ENCODE measurements at regions of chr2 and their contacts with region 1.

Region 1: DNA sequence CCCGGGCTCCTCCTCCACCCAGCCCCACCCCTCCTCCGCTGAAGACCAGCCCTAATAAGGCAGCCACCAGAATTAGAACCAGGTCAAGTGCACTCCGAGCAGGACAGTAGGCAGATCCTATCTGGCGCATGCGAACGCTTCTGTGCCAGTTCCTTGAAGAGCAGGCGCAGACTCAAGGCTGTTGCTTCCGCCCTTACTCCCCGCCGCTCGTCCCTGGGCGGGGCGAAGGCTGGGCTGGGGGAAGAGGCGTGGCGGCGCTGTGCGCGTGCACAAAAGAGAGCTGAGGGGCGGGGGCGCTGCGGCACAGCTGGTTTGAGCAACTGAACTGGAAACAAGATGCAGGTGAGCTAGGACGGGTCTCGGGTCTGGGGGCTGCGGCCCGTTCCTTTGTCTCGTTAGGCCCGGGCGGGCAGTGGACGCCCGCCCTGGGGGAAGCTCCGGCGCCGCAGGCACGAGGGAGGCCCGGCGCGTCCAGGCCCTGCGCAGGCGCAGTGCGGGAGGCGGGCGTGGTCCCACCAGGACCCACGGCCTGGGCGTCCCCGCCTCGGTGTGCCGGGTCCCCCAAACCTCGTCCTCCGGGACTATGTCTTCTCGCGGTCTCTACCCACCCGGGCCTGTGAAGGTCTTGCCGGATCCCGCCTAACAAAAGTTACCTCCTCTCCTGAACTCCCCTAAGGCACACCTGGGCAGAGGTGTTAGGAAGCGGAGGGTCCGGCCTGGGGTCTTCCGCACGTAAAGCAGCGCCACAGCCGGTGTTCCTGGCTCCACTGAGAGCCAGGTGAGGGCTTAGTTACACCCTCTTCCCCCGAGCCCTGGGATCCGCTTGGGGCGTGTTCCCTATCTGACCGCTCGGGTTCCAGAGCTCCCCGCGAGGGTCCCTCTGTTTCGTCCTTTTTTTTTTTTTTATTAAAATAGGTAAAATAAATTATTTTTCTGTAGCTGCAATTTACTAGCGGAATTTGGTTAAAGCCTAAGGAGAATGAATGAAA is at the start of gene PDCL3:
- DNase-seq: peak; percentile 95 to 98
- ATAC-seq: peak; percentile 95 to 98 (median 96)
- H3K4me3 ChIP-seq: peak within 1 kb of the TSS; percentile 86
- H3K27ac ChIP-seq: peak within 1 kb of the TSS; percentile 90
- H3K4me1 ChIP-seq: peaks cover 5% of the 10 kb centered on the region
- H3K27me3 ChIP-seq: no peaks in the 10 kb centered on the region
- CTCF ChIP-seq: no peak
- total RNA-seq, gene PDCL3: 23.1 to 31.2 (median 29.8) TPM

Region 2: DNA sequence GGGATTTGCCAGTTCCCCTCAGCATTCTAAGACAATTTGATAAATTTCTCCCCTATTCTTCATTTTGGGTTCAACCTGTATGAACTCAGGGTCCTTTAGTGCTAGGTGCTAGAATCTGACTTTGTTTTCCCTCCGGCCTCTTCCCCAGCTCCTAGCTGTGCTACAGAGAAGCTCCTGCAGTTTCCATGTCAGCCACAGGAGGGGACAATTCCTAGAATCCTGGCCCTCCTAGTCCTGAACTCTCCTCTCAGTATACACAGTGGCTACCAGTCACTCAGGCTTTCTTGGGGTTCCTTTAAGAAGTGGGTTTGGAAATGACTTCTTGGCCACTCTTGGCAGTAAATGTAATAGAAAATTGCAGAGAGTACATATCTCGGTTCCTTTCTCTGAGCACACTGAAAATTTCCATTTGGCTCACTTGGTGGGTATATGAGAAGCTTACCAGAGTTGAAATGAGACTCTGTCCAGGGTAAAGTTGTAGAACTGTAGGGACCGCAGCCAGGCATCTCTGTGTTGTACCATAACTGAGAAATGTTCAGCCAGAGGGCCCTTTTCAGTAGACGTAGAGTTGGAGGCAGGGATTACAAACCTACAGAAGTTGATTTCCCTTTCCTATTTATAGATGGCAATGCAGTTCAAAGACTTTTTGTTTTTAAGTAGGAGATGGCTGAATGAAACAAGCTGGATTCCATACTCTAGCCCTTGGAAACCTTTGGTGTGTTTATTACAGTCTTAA is 140.5 kb before region 1 on chr2:
- intact Hi-C with region 1: loop called (anchors 5 to 10 kb)
- DNase-seq: no peak
- ATAC-seq: no peak
- H3K4me3 ChIP-seq: no peak overlapping the region
- H3K27ac ChIP-seq: no peak overlapping the region
- H3K4me1 ChIP-seq: no peaks in the 10 kb centered on the region
- H3K27me3 ChIP-seq: no peaks in the 10 kb centered on the region
- CTCF ChIP-seq: peak; percentile 28

Region 3: GRCh38 chr2:100427628-100428258 is 135.3 kb before region 1 on chr2:
- intact Hi-C with region 1: loop called (anchors 5 to 10 kb)
- DNase-seq: peak; percentile 26 to 42
- ATAC-seq: no peak
- H3K4me3 ChIP-seq: no peak overlapping the region
- H3K27ac ChIP-seq: no peak overlapping the region
- H3K4me1 ChIP-seq: no peaks in the 10 kb centered on the region
- H3K27me3 ChIP-seq: no peaks in the 10 kb centered on the region
- CTCF ChIP-seq: peak; percentile 22

Measured in psoas muscle (tissue), 8 donors.